Activated naive CD4-positive, alpha-beta T cell treated with anti-CD3 and anti-CD28 coated beads for 36 hours (primary cell): ENCODE measurements at regions of chr1 and their contacts with region 1.

Region 1: DNA sequence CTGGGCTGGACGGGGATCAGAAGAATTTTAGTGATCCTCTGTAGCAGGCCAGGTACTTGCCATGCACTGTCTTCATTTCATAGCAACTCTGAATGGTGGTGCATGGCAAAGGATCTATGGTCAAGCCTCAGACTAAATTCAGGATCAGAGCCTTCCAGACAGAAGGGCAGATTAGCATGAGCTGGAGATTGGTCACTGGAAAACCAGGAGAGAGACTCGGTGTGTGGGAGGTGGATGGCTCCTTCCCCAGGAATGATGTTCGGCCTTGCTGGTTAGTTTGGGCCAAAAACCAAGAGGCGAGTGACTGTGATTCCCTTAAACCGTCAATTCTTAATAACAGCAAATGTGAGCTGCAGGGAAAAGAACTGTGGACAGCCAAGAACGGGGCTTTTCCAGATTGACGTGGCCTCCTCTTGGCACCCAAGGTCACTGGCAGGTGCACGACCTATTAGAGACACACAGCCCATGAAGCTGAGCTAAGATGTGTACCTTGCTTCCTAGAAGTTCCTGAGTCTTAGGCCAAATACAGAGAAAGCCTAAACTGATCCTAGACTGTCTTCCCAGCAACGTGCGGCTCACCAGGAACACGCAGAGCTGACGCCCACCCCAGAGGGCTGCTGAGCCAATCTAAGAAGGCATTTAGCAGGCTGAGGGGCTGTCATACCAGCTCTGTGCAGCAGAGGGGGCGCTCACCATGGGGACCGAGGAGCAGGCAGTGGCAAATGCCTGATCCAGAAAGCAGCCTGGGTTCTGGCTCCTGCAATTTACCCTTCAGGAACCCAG is 18.5 kb downstream of the ALDH4A1 start:
- DNase-seq: peak; percentile 83
- H3K4me3 Mint-ChIP-seq: no peak overlapping the region
- H3K27ac Mint-ChIP-seq: peak overlapping the region; percentile 18
- H3K4me1 Mint-ChIP-seq: no peaks in the 10 kb centered on the region
- H3K27me3 Mint-ChIP-seq: no peaks in the 10 kb centered on the region

Region 2: DNA sequence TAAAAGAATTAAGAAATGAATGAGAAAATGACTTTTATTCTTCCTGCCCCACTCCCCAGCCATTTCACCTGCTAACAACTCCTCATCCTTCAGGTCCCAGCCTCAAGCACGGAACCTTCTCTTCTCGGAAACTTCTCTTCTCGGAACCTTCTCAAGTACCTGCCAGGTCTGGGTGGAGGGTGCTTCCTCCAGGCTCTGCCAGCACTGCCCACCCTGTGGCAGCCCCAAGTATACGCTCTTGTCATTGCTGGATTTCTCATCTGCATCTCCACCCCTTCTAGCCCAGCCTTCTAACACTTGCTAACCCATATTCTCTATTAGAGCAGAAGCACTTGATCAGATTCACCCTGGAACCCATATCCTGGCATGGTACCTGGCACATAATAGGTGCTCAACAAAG is 76.6 kb after region 1 on chr1:
- CTCF ChIA-PET with region 1: no interaction called
- intact Hi-C with region 1: no loop called
- DNase-seq: no peak
- H3K4me3 Mint-ChIP-seq: no peak overlapping the region
- H3K27ac Mint-ChIP-seq: no peak overlapping the region
- H3K4me1 Mint-ChIP-seq: peaks cover 17% of the 10 kb centered on the region
- H3K27me3 Mint-ChIP-seq: no peaks in the 10 kb centered on the region

Region 3: DNA sequence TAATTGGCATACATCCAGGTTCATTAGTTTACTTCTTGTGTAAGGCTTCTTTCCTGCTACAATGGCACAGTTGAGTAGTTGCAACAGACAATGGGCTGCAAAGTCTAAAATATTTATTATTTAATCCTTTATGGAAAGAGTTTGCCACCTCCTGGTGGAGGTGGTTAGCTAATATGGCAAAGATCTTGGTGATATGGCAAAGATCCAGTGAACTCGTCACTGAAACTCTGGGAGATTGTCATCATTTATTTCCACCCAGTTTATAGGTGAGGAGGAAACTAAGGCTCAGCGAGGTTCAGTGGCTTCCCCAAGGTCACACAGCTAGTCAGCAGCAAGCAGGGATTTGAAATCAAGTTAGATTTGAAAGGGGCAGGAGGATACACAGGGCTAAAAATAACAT is 88.7 kb after region 1 on chr1:
- CTCF ChIA-PET with region 1: interaction called, 15 read pairs
- intact Hi-C with region 1: loop called (anchors 1 kb)
- DNase-seq: no peak
- H3K4me3 Mint-ChIP-seq: no peak overlapping the region
- H3K27ac Mint-ChIP-seq: no peak overlapping the region
- H3K4me1 Mint-ChIP-seq: peaks cover 3% of the 10 kb centered on the region
- H3K27me3 Mint-ChIP-seq: no peaks in the 10 kb centered on the region

Region 4: DNA sequence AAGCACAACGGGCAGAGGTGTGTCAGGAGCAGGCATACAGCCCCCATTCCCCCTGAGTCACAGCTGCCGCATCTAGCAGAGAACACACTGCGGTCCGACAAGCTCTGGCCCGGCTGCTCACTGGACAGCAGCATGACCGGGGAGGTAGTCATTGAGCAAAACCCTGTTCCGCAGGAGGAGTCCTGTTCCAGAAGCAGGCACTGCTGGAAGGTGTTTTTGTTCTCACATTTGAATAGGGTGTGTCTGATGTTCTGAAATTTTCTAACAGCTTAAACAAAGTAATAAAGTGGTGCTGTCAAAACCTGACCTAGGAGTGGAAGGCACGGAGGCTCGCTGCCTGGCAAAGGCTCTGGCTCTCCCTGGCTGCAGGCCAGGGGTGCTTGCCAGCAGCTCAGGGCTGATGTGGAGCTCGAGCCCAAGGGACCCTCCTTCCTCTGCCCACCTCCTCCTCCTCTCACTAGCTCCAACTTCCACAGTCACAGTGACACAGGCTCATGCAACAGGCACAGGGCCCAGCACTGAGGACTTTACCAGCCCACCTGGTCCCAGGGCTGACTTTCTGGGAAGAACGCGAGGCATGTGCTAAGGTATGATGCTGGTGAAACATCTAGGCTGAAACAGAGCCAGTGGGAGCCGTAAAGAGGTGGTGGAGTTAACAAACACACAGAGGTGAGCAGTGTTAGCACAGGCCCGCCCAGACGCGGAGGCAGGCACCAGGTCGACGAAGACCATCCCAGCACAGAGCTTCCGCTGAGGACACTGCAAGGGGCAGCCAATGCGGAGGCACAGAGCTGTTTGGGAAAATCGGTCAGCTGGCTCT is 191.3 kb after region 1 on chr1:
- CTCF ChIA-PET with region 1: interaction called, 13 read pairs
- intact Hi-C with region 1: no loop called
- DNase-seq: no peak
- H3K4me3 Mint-ChIP-seq: no peak overlapping the region
- H3K27ac Mint-ChIP-seq: peak overlapping the region; percentile 74
- H3K4me1 Mint-ChIP-seq: peaks cover 53% of the 10 kb centered on the region
- H3K27me3 Mint-ChIP-seq: no peaks in the 10 kb centered on the region